Mammary epithelial cell (primary cell): ENCODE measurements at regions of chr10 and their contacts with region 1.

Region 1: GRCh38 chr10:114173921-114174694 is at the start of gene CCDC186:
- DNase-seq: peak; percentile 97
- H3K4me3 ChIP-seq: peak within 1 kb of the TSS; percentile 90 to 99 (median 99)
- H3K27ac ChIP-seq: peak within 1 kb of the TSS; percentile 88
- H3K4me1 ChIP-seq: peaks cover 9% of the 10 kb centered on the region
- H3K27me3 ChIP-seq: no peaks in the 10 kb centered on the region
- CTCF ChIP-seq: no peak
- total RNA-seq, gene CCDC186: 19.8 to 22.9 TPM

Region 2: DNA sequence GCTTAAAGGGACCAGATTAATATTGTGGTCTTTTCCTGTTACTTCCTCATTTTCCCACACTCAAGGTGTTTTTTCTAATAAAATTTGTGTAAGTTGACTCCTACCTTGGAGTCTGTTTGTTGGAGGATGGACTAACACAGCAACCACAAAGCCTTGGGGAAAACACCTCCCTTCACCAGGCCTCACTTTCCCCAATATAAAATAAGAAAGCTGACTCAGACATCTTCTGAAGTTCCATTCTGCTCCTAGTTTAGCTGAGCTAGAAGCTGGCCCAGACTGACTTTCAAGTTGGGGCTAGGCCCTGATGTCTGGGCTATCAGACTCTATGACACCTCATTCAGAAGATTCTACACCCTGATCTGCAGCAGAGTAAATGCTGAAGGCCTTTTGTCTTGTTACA is 203.5 kb before region 1 on chr10:
- CTCF ChIA-PET with region 1: no interaction called
- dilution Hi-C with region 1: no loop called
- in situ Hi-C with region 1: no loop called
- intact Hi-C with region 1: no loop called
- DNase-seq: no peak
- H3K4me3 ChIP-seq: no peak overlapping the region
- H3K27ac ChIP-seq: no peak overlapping the region
- H3K4me1 ChIP-seq: no peaks in the 10 kb centered on the region
- H3K27me3 ChIP-seq: no peaks in the 10 kb centered on the region
- CTCF ChIP-seq: no peak

Region 3: DNA sequence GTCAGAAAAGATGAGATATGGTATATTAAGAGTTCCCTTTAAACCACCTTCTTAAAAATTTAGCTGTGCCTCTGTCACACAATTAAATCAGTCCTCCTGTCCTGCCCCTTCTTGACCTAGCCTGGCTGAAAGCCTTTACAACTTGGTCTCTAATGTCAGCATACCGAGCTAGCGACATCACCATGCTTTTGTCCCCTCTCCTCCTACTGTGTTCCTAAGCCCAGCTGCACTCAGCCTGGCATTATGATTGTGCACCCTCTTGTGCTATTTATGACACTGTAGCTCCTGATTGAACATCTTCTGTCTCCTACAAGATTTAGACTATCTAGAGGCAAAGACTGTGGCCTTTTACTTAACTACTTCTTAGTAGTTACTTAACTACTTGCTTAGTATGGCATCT is 34.2 kb after region 1 on chr10:
- CTCF ChIA-PET with region 1: no interaction called
- dilution Hi-C with region 1: no loop called
- in situ Hi-C with region 1: no loop called
- intact Hi-C with region 1: no loop called
- DNase-seq: no peak
- H3K4me3 ChIP-seq: no peak overlapping the region
- H3K27ac ChIP-seq: no peak overlapping the region
- H3K4me1 ChIP-seq: no peaks in the 10 kb centered on the region
- H3K27me3 ChIP-seq: peaks cover 8% of the 10 kb centered on the region
- CTCF ChIP-seq: no peak

Region 4: DNA sequence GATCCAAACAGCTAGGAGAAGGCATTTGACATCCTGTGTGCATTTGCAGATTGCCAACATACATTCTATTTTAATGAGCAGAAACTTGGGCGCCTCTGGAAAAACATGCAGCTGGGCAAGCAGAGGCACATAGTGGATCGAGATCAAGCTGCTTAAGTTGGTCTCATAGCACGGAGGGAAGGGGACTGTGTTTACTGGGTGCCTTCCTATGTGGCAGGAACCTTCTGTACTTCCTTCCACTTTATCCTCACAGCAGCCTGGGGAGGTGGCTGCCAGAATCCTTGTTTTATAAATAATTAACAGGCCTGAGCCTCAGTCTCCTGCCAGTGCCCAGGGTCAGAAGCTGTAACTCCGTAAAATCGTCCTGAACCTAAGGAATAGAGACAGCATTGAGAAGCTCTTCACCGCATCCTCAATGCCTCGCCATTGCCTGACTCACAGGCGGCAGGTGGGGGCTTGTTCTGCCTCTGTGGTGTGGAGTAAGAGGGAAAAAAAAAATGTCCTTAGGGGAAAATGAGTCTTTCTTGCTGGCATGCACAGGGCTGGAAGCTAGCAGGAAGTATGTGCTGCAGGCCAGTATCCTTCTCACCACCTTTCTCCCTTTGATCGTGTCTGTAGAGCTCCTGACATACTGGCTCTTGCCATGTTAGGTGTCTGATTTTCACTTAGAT is 71.1 kb after region 1 on chr10:
- CTCF ChIA-PET with region 1: interaction called, 3 read pairs
- dilution Hi-C with region 1: no loop called
- in situ Hi-C with region 1: no loop called
- intact Hi-C with region 1: loop called (anchors 1 kb)
- DNase-seq: peak; percentile 97
- H3K4me3 ChIP-seq: peak overlapping the region; percentile 21 to 39 (median 38)
- H3K27ac ChIP-seq: peak overlapping the region; percentile 86
- H3K4me1 ChIP-seq: peaks cover 44% of the 10 kb centered on the region
- H3K27me3 ChIP-seq: no peaks in the 10 kb centered on the region
- CTCF ChIP-seq: no peak

Region 5: DNA sequence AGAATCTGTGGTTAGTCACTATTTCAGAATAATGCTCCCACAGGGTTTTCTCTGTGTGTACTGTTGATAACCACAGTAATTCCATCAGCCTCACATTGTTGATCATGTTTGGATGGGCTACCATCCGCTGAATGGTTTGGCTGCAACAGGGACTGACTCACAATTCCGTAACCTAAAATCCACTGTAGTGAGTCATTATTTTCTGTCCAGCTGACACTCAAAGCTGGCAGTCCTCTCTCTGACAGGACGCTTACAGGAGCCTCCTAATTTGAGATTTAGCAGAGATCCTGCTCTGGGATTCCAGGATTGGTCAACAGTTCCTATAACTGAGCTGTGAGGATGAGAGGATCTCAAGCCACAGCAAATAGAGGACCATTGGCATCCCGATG is 97.7 kb after region 1 on chr10:
- CTCF ChIA-PET with region 1: no interaction called
- dilution Hi-C with region 1: no loop called
- in situ Hi-C with region 1: no loop called
- intact Hi-C with region 1: loop called (anchors 1 kb)
- DNase-seq: peak; percentile 96
- H3K4me3 ChIP-seq: no peak overlapping the region
- H3K27ac ChIP-seq: peak overlapping the region; percentile 58
- H3K4me1 ChIP-seq: peaks cover 28% of the 10 kb centered on the region
- H3K27me3 ChIP-seq: no peaks in the 10 kb centered on the region
- CTCF ChIP-seq: no peak

Region 6: DNA sequence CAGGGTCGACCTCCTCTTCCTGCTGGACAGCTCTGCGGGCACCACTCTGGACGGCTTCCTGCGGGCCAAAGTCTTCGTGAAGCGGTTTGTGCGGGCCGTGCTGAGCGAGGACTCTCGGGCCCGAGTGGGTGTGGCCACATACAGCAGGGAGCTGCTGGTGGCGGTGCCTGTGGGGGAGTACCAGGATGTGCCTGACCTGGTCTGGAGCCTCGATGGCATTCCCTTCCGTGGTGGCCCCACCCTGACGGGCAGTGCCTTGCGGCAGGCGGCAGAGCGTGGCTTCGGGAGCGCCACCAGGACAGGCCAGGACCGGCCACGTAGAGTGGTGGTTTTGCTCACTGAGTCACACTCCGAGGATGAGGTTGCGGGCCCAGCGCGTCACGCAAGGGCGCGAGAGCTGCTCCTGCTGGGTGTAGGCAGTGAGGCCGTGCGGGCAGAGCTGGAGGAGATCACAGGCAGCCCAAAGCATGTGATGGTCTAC is 111.9 kb after region 1 on chr10:
- CTCF ChIA-PET with region 1: no interaction called
- dilution Hi-C with region 1: no loop called
- in situ Hi-C with region 1: no loop called
- intact Hi-C with region 1: loop called (anchors 5 kb)
- DNase-seq: no peak
- H3K4me3 ChIP-seq: no peak overlapping the region
- H3K27ac ChIP-seq: no peak overlapping the region
- H3K4me1 ChIP-seq: no peaks in the 10 kb centered on the region
- H3K27me3 ChIP-seq: no peaks in the 10 kb centered on the region
- CTCF ChIP-seq: no peak

Region 7: GRCh38 chr10:114308531-114309363 is 134.6 kb after region 1 on chr10:
- CTCF ChIA-PET with region 1: no interaction called
- dilution Hi-C with region 1: no loop called
- in situ Hi-C with region 1: no loop called
- intact Hi-C with region 1: no loop called
- DNase-seq: no peak
- H3K4me3 ChIP-seq: no peak overlapping the region
- H3K27ac ChIP-seq: no peak overlapping the region
- H3K4me1 ChIP-seq: peaks cover 24% of the 10 kb centered on the region
- H3K27me3 ChIP-seq: no peaks in the 10 kb centered on the region
- CTCF ChIP-seq: no peak

Region 8: DNA sequence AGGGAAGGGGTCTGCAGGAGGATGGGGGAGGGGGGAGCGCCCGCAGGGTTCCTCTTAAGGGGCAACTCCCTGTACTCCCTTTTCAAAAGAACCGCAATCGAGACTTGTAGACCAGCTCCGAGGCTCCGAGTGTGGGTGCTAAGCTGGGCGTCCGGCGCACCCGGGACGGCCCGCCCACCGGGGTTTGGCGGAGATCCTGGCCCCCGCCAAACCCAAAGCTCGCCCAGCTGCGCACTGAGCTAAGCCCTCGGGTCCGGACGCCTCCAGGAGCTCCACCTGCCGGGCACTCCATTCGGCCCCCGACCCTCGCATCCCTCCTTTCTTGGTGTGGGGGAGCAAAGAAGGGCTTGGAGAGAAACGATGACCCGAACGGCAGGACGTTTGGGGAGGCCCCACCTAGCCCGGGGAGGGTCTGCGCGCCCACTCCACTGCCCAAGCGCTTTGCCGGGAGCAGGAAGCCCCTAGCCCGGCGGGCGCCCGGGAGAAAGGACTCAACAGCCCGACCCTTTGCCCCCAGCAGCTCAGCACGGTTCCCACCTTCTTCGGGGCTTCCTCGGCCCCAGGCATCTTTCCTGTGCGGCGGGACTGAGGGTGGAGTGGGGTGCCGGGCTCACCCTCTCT is 229.5 kb after region 1 on chr10:
- CTCF ChIA-PET with region 1: no interaction called
- dilution Hi-C with region 1: no loop called
- in situ Hi-C with region 1: loop called in 1 of 2 experiments (anchors 25 kb)
- intact Hi-C with region 1: no loop called
- DNase-seq: peak; percentile 71
- H3K4me3 ChIP-seq: peak overlapping the region; percentile 83 to 88 (median 88)
- H3K27ac ChIP-seq: peak overlapping the region; percentile 79
- H3K4me1 ChIP-seq: peaks cover 51% of the 10 kb centered on the region
- H3K27me3 ChIP-seq: no peaks in the 10 kb centered on the region
- CTCF ChIP-seq: peak; percentile 27 to 59

Region 9: GRCh38 chr10:114437456-114438292 is 263.6 kb after region 1 on chr10:
- CTCF ChIA-PET with region 1: no interaction called
- dilution Hi-C with region 1: no loop called
- in situ Hi-C with region 1: no loop called
- intact Hi-C with region 1: loop called (anchors 10 kb)
- DNase-seq: peak; percentile 26
- H3K4me3 ChIP-seq: no peak overlapping the region
- H3K27ac ChIP-seq: no peak overlapping the region
- H3K4me1 ChIP-seq: no peaks in the 10 kb centered on the region
- H3K27me3 ChIP-seq: no peaks in the 10 kb centered on the region
- CTCF ChIP-seq: peak; percentile 49 to 61

Region 10: DNA sequence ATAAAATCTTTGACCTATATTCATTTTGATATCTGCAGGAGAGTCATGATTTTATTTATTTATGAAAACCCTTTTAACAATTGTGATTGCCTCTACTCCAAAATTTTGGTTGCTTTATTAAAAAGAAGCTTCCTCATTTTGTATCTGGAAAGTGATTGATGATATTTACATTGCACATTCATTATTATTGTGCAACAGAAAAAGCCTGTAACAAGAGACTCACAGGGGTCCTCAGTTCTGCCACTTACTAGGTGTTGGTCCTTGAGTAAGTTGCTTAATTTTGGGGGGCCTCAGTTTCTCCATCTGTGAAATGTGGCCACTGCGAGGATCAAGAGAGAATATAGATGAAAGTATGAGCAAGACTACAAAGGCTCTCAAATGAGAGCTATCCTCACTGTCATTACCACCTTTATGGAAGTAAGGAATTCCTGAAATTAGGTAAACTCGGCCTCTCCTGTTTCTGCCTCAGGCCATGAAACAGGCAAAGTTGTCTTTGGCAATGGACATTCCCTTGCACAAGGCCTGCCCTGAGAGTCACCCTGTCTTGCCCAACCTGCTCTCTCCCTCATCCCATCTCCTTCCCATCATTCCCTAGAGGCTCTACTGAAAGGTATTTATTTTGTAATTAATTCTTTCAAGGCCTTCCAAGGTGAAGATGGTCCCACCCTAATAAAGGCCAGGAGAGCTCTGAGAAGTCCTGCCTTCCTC is 550.0 kb after region 1 on chr10:
- CTCF ChIA-PET with region 1: no interaction called
- dilution Hi-C with region 1: no loop called
- in situ Hi-C with region 1: no loop called
- intact Hi-C with region 1: no loop called
- DNase-seq: peak; percentile 85
- H3K4me3 ChIP-seq: no peak overlapping the region
- H3K27ac ChIP-seq: peak overlapping the region; percentile 37
- H3K4me1 ChIP-seq: peaks cover 14% of the 10 kb centered on the region
- H3K27me3 ChIP-seq: no peaks in the 10 kb centered on the region
- CTCF ChIP-seq: no peak